Activated CD4-positive, alpha-beta T cell treated with anti-CD3 and anti-CD28 coated beads for 36 hours (primary cell): ENCODE measurements at regions of chr4 and their contacts with region 1.

Region 1: GRCh38 chr4:108030332-108030731 is 40.6 kb downstream of the HADH start:
- DNase-seq: peak; percentile 87
- ATAC-seq: peak; percentile 85
- H3K4me3 Mint-ChIP-seq: peak overlapping the region; percentile 38
- H3K27ac Mint-ChIP-seq: peak overlapping the region; percentile 97
- H3K4me1 Mint-ChIP-seq: peaks cover 65% of the 10 kb centered on the region
- H3K27me3 Mint-ChIP-seq: no peaks in the 10 kb centered on the region

Region 2: GRCh38 chr4:107906458-107907100 is 123.8 kb before region 1 on chr4:
- CTCF ChIA-PET with region 1: no interaction called
- POLR2A ChIA-PET with region 1: no interaction called
- intact Hi-C with region 1: no loop called
- DNase-seq: no peak
- ATAC-seq: no peak
- H3K4me3 Mint-ChIP-seq: no peak overlapping the region
- H3K27ac Mint-ChIP-seq: no peak overlapping the region
- H3K4me1 Mint-ChIP-seq: peaks cover 3% of the 10 kb centered on the region
- H3K27me3 Mint-ChIP-seq: peaks cover 3% of the 10 kb centered on the region

Region 3: GRCh38 chr4:107978716-107979451 is 51.4 kb before region 1 on chr4:
- CTCF ChIA-PET with region 1: no interaction called
- POLR2A ChIA-PET with region 1: no interaction called
- intact Hi-C with region 1: no loop called
- DNase-seq: no peak
- ATAC-seq: no peak
- H3K4me3 Mint-ChIP-seq: no peak overlapping the region
- H3K27ac Mint-ChIP-seq: no peak overlapping the region
- H3K4me1 Mint-ChIP-seq: peaks cover 3% of the 10 kb centered on the region
- H3K27me3 Mint-ChIP-seq: no peaks in the 10 kb centered on the region

Region 4: DNA sequence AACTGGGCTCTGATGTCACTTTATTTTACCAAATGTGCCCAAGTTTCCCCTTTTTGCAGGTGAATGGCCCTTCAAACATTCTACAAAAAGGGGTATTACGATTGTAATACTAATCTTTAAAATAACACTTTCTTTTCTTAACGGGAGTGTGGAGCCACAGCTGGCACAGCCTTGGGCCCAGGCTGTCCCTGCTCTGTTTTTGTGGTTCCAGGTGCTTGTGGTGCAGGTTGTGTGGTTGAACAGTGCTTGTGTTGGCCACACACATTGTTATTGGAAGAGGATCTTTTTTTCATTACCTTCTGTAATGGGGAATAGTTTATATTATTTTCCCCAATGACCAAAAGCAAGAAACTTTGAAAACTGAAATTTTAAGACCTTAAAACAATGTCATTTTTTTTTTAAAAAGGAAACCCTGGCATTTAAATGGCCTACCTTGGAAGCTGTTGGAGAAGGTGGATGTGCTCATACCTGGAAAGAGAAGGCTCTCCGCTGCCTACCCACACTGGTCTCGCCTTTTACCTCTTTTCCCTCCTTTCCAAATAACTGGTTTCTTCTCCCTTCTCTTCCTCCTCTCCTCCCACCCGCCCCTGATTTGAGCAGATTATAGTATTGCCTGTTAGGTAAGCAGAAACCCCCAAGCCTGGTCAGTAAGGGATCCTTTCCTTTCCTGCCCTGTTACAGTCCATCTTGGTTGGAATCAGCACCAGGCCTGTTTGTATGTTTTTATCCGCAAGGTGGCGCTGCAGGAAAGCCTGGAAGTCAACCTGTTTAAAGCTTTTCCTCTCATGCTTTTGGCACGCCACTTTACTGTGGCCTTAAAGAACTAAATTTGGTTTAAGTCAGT is 12.1 kb before region 1 on chr4:
- CTCF ChIA-PET with region 1: interaction called, 47 read pairs
- POLR2A ChIA-PET with region 1: interaction called, 6 read pairs
- intact Hi-C with region 1: no loop called
- DNase-seq: peak; percentile 91
- ATAC-seq: peak; percentile 89
- H3K4me3 Mint-ChIP-seq: no peak overlapping the region
- H3K27ac Mint-ChIP-seq: no peak overlapping the region
- H3K4me1 Mint-ChIP-seq: peaks cover 10% of the 10 kb centered on the region
- H3K27me3 Mint-ChIP-seq: no peaks in the 10 kb centered on the region

Region 5: DNA sequence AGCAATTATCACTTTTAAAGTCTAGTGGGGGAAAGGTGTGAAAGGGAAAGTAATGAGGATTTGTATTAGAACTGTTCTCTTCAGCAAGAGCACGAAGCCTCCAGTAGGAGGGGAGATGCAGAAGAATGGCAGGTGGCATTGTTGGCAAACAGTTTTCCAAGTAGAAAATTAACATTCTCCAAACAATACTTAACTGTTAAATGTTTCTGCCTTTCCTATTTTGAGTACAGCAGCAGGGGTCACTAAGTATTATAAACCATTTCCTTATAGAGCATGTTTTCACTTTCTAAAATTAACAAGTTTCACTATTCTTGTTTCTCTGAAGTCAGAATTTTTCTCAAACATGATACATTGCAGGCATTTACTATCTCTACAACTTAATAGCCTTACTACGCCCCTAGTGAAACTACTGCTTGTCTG is 79.7 kb after region 1 on chr4:
- CTCF ChIA-PET with region 1: interaction called, 15 read pairs
- POLR2A ChIA-PET with region 1: no interaction called
- intact Hi-C with region 1: loop called (anchors 2 kb)
- DNase-seq: no peak
- ATAC-seq: peak; percentile 25
- H3K4me3 Mint-ChIP-seq: peak overlapping the region; percentile 22
- H3K27ac Mint-ChIP-seq: peak overlapping the region; percentile 91
- H3K4me1 Mint-ChIP-seq: peaks cover 89% of the 10 kb centered on the region
- H3K27me3 Mint-ChIP-seq: no peaks in the 10 kb centered on the region

Region 6: GRCh38 chr4:108160741-108161352 is 130.5 kb after region 1 on chr4:
- CTCF ChIA-PET with region 1: interaction called, 13 read pairs
- POLR2A ChIA-PET with region 1: interaction called, 3 read pairs
- intact Hi-C with region 1: loop called in 1 of 2 experiments (anchors 1 kb)
- DNase-seq: no peak
- ATAC-seq: peak; percentile 33
- H3K4me3 Mint-ChIP-seq: peak overlapping the region; percentile 56
- H3K27ac Mint-ChIP-seq: peak overlapping the region; percentile 87
- H3K4me1 Mint-ChIP-seq: peaks cover 61% of the 10 kb centered on the region
- H3K27me3 Mint-ChIP-seq: no peaks in the 10 kb centered on the region

Region 7: DNA sequence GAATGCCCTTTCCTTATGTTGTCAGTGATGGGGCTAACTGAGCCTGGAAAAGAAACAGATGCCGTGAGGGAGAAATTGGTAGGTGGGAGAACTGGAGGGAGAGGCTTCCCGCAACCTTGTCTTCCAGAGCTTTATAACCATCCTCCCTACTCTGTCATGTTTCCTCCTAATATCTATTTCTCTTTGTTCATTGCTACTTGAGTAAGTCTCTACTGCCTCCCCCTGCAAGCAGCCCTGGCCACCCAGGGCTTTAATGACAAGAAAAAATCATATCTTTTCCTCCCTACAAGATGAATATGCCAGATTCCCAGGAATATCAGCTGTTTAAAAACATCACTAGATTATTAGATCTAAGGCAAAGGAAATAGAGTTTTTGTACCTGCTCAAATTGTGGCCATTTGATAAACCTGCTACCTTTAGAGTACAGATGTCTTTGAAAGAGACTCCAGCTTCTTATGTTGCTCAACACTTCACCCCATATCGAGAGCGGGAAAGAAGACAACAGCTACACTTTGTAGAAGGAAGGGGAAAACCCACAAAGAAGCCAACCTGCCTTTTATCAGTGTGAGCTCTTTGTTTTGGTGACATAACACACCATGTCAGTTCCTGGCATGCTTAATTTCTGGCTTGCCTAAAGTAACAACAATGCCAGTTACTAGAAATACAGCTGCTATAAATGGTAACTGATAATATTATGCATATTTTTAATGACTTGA is 325.0 kb after region 1 on chr4:
- CTCF ChIA-PET with region 1: no interaction called
- POLR2A ChIA-PET with region 1: no interaction called
- intact Hi-C with region 1: loop called (anchors 5 kb)
- DNase-seq: peak; percentile 42
- ATAC-seq: peak; percentile 82
- H3K4me3 Mint-ChIP-seq: peak overlapping the region; percentile 10
- H3K27ac Mint-ChIP-seq: peak overlapping the region; percentile 79
- H3K4me1 Mint-ChIP-seq: peaks cover 53% of the 10 kb centered on the region
- H3K27me3 Mint-ChIP-seq: no peaks in the 10 kb centered on the region

Region 8: DNA sequence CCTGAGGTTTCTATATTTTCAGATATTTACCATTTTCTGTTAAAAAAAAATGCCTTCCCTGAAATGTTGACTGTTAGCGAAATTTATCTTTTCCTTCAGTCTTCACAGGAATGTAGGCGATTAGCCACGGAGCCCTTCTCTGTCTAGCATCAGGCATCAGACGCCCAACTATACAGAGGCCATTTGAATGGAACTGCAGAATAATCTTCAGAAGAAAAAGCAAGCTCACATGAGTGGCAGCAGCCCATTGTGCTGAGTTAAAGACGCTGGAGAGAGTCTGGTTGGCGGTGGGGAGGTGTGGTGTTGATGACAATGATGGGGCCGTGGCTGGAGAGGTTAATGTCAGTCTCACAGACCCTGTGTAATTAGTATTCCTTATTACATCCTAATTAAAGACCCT is 335.2 kb after region 1 on chr4:
- CTCF ChIA-PET with region 1: no interaction called
- POLR2A ChIA-PET with region 1: no interaction called
- intact Hi-C with region 1: no loop called
- DNase-seq: no peak
- ATAC-seq: no peak
- H3K4me3 Mint-ChIP-seq: no peak overlapping the region
- H3K27ac Mint-ChIP-seq: no peak overlapping the region
- H3K4me1 Mint-ChIP-seq: peaks cover 37% of the 10 kb centered on the region
- H3K27me3 Mint-ChIP-seq: peaks cover 6% of the 10 kb centered on the region

Region 9: DNA sequence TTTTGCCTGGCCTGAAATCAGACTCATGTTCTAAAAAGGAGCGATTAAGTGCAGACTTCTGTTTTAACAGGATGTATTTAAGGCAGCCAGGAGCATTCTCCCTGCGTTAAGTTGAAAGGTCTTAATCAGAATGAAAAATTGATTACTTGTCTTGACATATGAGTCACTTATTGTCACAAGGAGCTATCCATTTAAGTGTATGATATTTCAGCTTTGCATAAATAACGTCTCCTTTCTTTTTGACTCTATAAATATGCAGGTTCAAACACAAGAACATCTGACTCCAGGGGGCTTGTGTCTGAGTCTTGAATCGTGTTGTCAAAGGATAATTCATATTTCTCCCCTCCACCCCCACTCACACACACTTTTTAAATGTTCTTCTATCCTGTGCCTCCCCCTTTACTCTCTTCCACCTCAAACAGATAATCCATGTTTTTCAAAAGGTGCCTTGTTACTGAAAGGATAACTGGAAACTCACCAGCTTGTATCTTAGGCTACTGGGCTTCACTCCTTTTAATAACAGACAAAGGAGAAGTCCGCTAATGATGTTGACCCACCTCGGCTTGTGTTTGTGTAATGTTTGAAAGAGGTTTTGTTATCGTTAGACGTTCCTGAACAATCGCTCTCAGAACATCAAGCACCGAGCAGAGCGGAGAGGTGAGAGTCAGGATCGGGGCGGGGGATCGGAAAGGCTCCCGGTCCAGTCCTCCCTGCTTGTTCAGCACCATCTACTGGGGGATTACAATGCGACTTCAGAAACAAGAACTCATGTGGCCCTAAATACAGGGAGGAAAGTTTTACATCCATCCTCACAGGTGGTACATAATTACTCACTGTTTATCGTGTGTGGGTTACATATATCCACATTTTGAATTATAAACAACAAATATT is 482.5 kb after region 1 on chr4:
- CTCF ChIA-PET with region 1: interaction called, 11 read pairs
- POLR2A ChIA-PET with region 1: no interaction called
- intact Hi-C with region 1: loop called in 1 of 2 experiments (anchors 1 kb)
- DNase-seq: peak; percentile 64
- ATAC-seq: peak; percentile 95
- H3K4me3 Mint-ChIP-seq: peak overlapping the region; percentile 58
- H3K27ac Mint-ChIP-seq: peak overlapping the region; percentile 2
- H3K4me1 Mint-ChIP-seq: peaks cover 18% of the 10 kb centered on the region
- H3K27me3 Mint-ChIP-seq: peaks cover 2% of the 10 kb centered on the region